Naive thymus-derived CD4-positive, alpha-beta T cell (primary cell): ENCODE measurements at regions of chr17 and their contacts with region 1.

Region 1: GRCh38 chr17:27455914-27456680 is at the start of gene KSR1:
- DNase-seq: peak; percentile 66 to 86 (median 76)
- ATAC-seq: peak; percentile 95
- H3K4me3 ChIP-seq: peak within 1 kb of the TSS; percentile 71
- H3K4me3 Mint-ChIP-seq: peak within 1 kb of the TSS; percentile 79 to 96 (median 90)
- H3K27ac ChIP-seq: peak within 1 kb of the TSS; percentile 65
- H3K27ac Mint-ChIP-seq: peak within 1 kb of the TSS; percentile 62 to 95 (median 85)
- H3K4me1 ChIP-seq: peaks cover 10 to 13% of the 10 kb centered on the region in 2 donors
- H3K4me1 Mint-ChIP-seq: peaks cover 5 to 49% (median 21%) of the 10 kb centered on the region in 7 donors
- H3K27me3 ChIP-seq: no peaks in the 10 kb centered on the region
- H3K27me3 Mint-ChIP-seq: no peaks in the 10 kb centered on the region
- total RNA-seq, gene KSR1: 22.5 to 96.4 (median 27.8) TPM

Region 2: DNA sequence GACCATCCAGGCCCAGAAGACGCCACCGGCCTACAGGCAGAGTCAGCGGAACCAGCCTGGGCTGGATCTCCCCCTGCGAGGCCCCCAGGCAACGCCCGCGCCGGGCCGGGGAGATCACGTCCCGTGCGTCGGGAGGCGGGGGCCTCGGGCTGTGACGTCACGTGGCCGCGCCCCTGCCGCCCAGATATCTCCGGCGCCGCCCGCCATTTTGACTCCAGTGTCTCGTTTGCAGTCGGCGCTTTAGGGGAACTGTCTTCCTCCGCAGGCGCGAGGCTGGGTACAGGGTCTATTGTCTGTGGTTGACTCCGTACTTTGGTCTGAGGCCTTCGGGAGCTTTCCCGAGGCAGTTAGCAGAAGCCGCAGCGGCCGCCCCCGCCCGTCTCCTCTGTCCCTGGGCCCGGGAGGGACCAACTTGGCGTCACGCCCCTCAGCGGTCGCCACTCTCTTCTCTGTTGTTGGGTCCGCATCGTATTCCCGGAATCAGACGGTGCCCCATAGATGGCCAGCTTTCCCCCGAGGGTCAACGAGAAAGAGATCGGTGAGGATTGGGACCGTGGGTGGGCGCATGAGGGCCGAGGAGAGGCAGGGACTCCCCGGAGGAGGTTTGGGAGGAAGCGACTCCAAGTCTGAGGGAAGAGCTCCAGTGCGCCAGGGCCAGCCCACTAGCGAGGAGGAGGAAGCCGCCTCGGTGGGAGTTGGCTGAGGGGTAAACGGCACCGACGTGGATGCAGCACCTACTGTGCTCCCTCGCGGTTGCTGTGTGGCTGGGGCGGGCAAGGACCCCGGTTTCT is 162.0 kb before region 1 on chr17 and contains the start of gene WSB1:
- CTCF ChIA-PET with region 1: no interaction called
- POLR2A ChIA-PET with region 1: interaction called, 20 read pairs
- intact Hi-C with region 1: loop called (anchors 1 to 5 kb)
- DNase-seq: peak; percentile 91 to 96 (median 94)
- ATAC-seq: peak; percentile 94
- H3K4me3 ChIP-seq: peak within 1 kb of the TSS; percentile 99
- H3K4me3 Mint-ChIP-seq: peak within 1 kb of the TSS; percentile 90 to 100 (median 96)
- H3K27ac ChIP-seq: peak within 1 kb of the TSS; percentile 96
- H3K27ac Mint-ChIP-seq: peak within 1 kb of the TSS; percentile 94 to 100 (median 99)
- H3K4me1 ChIP-seq: peaks cover 19 to 34% of the 10 kb centered on the region in 2 donors
- H3K4me1 Mint-ChIP-seq: peaks cover 21 to 51% (median 43%) of the 10 kb centered on the region in 7 donors
- H3K27me3 ChIP-seq: no peaks in the 10 kb centered on the region
- H3K27me3 Mint-ChIP-seq: no peaks in the 10 kb centered on the region
- total RNA-seq, gene WSB1: 110 to 185 (median 134) TPM

Region 3: DNA sequence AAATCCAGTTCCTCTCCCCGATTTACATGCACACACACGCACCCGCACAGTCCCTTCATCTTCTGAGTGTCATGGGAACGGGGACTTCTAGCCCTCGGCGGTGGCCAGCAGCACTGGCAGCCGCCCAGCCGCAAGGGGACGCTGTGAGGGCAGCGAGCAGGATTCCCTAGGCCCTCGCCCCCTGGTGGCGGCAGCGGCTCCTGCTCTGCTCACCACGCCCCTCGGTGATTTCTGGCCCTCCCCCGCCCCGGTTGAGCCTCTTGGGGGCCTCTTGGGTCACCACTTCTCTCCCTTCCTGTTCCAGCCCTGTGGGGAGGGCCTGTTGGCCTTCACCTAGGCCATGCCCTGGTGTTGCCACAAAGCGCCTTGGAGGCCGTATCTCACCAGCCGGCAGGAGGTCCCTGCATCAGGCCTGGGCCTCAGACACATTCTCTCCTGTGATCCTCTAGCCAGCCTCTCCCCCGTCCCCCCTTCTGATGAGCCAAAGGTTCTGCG is 75.0 kb before region 1 on chr17:
- CTCF ChIA-PET with region 1: no interaction called
- POLR2A ChIA-PET with region 1: interaction called, 3 read pairs
- intact Hi-C with region 1: loop called in 1 of 2 experiments (anchors 10 kb)
- DNase-seq: peak; percentile 31 to 87 (median 53)
- ATAC-seq: peak; percentile 94
- H3K4me3 ChIP-seq: no peak overlapping the region
- H3K4me3 Mint-ChIP-seq: no peak overlapping the region
- H3K27ac ChIP-seq: no peak overlapping the region
- H3K27ac Mint-ChIP-seq: no peak overlapping the region
- H3K4me1 ChIP-seq: no peaks in the 10 kb centered on the region
- H3K4me1 Mint-ChIP-seq: peaks cover 0 to 7% (median 0%) of the 10 kb centered on the region in 7 donors
- H3K27me3 ChIP-seq: peaks cover 0 to 4% of the 10 kb centered on the region in 2 donors
- H3K27me3 Mint-ChIP-seq: peaks cover 12 to 28% (median 24%) of the 10 kb centered on the region in 5 donors

Region 4: DNA sequence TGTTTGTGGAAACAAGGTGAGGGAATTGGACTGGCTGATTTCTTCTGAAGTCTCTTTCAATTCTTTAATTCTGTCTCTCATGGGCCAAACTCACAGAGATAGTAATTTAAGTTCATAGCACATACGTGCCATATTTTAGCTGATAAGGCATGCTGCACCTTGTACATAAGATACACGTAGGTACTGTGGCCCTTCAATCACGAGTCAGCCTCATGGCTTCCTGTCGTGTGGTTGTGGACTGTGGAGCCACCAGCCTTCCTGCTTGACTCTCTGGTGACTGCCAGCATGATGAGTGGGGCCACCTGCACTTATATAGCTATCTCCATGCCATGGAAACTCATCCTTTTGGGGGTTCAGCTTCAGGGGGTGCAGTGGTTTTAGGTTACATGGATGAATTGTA is 25.2 kb after region 1 on chr17:
- CTCF ChIA-PET with region 1: no interaction called
- POLR2A ChIA-PET with region 1: no interaction called
- intact Hi-C with region 1: loop called in 1 of 2 experiments (anchors 1 kb)
- DNase-seq: peak in 6 of 9 donors; percentile 37 to 52 (median 47)
- ATAC-seq: peak; percentile 91
- H3K4me3 ChIP-seq: no peak overlapping the region
- H3K4me3 Mint-ChIP-seq: peak overlapping the region in 6 of 10 donors; percentile 12 to 79 (median 39)
- H3K27ac ChIP-seq: no peak overlapping the region
- H3K27ac Mint-ChIP-seq: peak overlapping the region in 7 of 9 donors; percentile 27 to 96 (median 63)
- H3K4me1 ChIP-seq: peaks cover 10 to 16% of the 10 kb centered on the region in 2 donors
- H3K4me1 Mint-ChIP-seq: peaks cover 21 to 87% (median 46%) of the 10 kb centered on the region in 7 donors
- H3K27me3 ChIP-seq: no peaks in the 10 kb centered on the region
- H3K27me3 Mint-ChIP-seq: no peaks in the 10 kb centered on the region

Region 5: DNA sequence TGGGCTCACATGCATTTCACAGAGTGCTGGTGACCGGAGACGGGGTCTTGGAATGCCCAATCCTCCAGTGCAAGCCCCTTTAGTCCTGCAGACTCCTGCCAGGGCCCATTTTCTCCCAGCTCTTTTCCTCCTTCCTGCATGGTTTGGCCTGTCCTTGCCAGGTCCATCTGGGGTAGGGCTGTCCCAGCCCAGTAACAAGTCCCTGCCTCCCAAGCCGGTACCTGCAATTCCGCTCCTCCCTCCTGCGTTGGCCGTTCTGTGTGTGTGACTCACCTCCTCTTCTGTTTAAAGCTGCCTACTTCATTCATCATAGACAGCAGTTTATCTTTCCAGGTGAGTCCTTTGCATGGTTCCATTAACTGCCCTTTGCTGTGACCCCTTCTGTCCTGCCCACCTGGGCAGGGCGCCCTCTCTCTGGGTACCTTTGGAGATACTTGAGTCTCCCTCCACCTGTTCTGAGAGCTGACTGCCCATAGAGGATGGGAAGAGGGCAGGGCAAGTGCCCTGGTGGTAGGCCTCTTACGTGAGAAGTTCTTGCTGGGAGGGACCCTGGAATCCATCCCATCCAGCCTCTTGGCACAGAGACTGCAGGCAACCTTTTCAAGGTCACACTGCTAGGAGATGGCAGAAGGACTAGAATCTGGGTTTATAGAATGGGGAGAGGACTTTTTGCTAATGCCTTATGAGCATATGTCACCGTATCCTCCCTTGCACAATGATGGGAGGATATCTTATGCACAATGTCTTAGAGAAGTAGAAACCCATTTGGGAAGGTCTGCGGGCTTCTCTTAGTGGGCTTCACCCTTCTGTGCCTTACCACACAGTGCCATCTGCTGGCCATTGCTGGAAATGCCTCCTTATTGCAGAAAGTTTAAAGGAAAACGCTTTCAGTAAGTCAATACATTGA is 145.2 kb after region 1 on chr17:
- CTCF ChIA-PET with region 1: interaction called, 7 read pairs
- POLR2A ChIA-PET with region 1: no interaction called
- intact Hi-C with region 1: loop called (anchors 1 kb)
- DNase-seq: peak; percentile 53 to 81 (median 68)
- ATAC-seq: peak; percentile 75
- H3K4me3 ChIP-seq: no peak overlapping the region
- H3K4me3 Mint-ChIP-seq: no peak overlapping the region
- H3K27ac ChIP-seq: no peak overlapping the region
- H3K27ac Mint-ChIP-seq: no peak overlapping the region
- H3K4me1 ChIP-seq: no peaks in the 10 kb centered on the region
- H3K4me1 Mint-ChIP-seq: peaks cover 0 to 22% (median 3%) of the 10 kb centered on the region in 7 donors
- H3K27me3 ChIP-seq: no peaks in the 10 kb centered on the region
- H3K27me3 Mint-ChIP-seq: no peaks in the 10 kb centered on the region

Region 6: DNA sequence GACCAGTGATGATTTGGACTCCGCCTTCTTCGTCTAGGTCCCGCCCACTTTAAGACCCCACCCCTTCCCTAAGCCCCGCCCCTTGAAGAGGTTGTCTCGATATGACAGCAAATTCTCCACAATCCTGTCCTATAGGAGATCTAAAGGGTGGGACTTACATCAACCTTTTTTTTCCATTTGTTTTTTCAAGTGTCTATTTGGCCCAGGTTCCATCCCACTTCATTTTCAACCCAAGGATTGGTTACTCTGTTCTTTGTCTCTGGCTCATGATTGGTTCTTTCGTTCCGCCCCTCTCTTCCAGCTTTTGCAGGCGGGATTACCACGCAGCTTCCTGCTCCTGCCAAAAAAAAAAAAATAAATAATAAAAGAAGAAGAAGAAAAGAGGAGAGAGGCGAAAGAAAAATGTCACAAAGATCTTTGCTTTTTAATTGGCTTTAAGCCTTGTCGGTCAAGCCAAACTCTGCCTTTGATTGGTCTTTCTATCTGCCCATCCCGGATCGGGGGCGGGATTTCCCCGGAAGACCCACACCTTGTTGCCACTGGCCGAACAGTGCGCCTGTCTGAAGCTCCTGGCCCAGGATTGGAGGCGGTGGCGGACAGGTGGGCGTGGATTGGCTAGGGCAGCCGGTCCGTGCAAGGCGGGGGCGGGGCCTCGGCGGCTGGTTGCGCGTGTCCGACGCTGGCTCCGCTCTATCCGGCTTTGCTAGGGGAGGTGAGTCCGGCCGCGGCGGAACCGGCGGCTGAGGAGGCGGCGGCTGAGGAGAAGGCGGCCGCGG is 585.2 kb after region 1 on chr17:
- CTCF ChIA-PET with region 1: no interaction called
- POLR2A ChIA-PET with region 1: no interaction called
- intact Hi-C with region 1: loop called in 1 of 2 experiments (anchors 10 kb)
- DNase-seq: peak; percentile 94 to 99 (median 99)
- ATAC-seq: peak; percentile 96
- H3K4me3 ChIP-seq: peak overlapping the region; percentile 45
- H3K4me3 Mint-ChIP-seq: peak overlapping the region; percentile 82 to 92 (median 88)
- H3K27ac ChIP-seq: peak overlapping the region; percentile 71
- H3K27ac Mint-ChIP-seq: peak overlapping the region; percentile 75 to 93 (median 88)
- H3K4me1 ChIP-seq: peaks cover 28 to 40% of the 10 kb centered on the region in 2 donors
- H3K4me1 Mint-ChIP-seq: peaks cover 35 to 65% (median 60%) of the 10 kb centered on the region in 7 donors
- H3K27me3 ChIP-seq: no peaks in the 10 kb centered on the region
- H3K27me3 Mint-ChIP-seq: peaks cover 0 to 16% (median 0%) of the 10 kb centered on the region in 5 donors